CD4-positive, alpha-beta T cell (primary cell): ENCODE measurements at regions of chr13 and their contacts with region 1.

Region 1: DNA sequence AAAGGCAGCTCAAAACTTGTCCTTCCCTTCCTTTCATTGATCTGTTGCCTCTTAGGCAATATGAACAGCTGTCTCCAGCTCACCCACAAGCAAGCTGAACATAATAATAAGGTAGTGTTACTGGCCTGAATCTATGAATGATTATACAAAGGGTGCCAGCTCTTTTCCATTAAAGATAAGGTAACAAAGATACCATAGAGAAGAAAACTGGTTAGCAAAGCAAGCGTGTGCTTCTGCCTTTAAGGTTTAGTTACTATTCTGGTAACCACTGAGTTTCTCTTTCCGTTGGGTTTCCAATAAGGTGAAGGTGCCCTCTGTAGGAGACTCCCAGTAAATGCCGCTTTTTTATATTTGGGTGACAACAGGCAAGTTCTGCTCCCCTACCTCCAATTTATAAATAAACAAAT is 12.1 kb upstream of the DACH1 start:
- DNase-seq: peak in 3 of 14 experiments; percentile 13 to 44 (median 25)
- ATAC-seq: peak; percentile 60
- H3K4me3 ChIP-seq: no peak overlapping the region
- H3K4me3 Mint-ChIP-seq: no peak overlapping the region
- H3K27ac ChIP-seq: no peak overlapping the region
- H3K27ac Mint-ChIP-seq: no peak overlapping the region
- H3K4me1 ChIP-seq: no peaks in the 10 kb centered on the region
- H3K4me1 Mint-ChIP-seq: peaks cover 4% of the 10 kb centered on the region
- H3K27me3 ChIP-seq: no peaks in the 10 kb centered on the region
- H3K27me3 Mint-ChIP-seq: no peaks in the 10 kb centered on the region
- CTCF ChIP-seq: peak; percentile 46

Region 2: GRCh38 chr13:70960841-70961443 is 918.2 kb before region 1 on chr13:
- CTCF ChIA-PET with region 1: no interaction called
- POLR2A ChIA-PET with region 1: no interaction called
- intact Hi-C with region 1: loop called in 1 of 2 experiments (anchors 5 kb)
- DNase-seq: peak in 1 of 14 experiments; percentile 4
- ATAC-seq: no peak
- H3K4me3 ChIP-seq: no peak overlapping the region
- H3K4me3 Mint-ChIP-seq: no peak overlapping the region
- H3K27ac ChIP-seq: no peak overlapping the region
- H3K27ac Mint-ChIP-seq: no peak overlapping the region
- H3K4me1 ChIP-seq: no peaks in the 10 kb centered on the region
- H3K4me1 Mint-ChIP-seq: no peaks in the 10 kb centered on the region
- H3K27me3 ChIP-seq: no peaks in the 10 kb centered on the region
- H3K27me3 Mint-ChIP-seq: no peaks in the 10 kb centered on the region
- CTCF ChIP-seq: peak; percentile 31

Region 3: GRCh38 chr13:71240911-71241310 is 638.2 kb before region 1 on chr13:
- CTCF ChIA-PET with region 1: no interaction called
- POLR2A ChIA-PET with region 1: no interaction called
- intact Hi-C with region 1: loop called in 1 of 2 experiments (anchors 5 kb)
- DNase-seq: no peak
- ATAC-seq: no peak
- H3K4me3 ChIP-seq: no peak overlapping the region
- H3K4me3 Mint-ChIP-seq: no peak overlapping the region
- H3K27ac ChIP-seq: no peak overlapping the region
- H3K27ac Mint-ChIP-seq: no peak overlapping the region
- H3K4me1 ChIP-seq: no peaks in the 10 kb centered on the region
- H3K4me1 Mint-ChIP-seq: no peaks in the 10 kb centered on the region
- H3K27me3 ChIP-seq: no peaks in the 10 kb centered on the region
- H3K27me3 Mint-ChIP-seq: no peaks in the 10 kb centered on the region
- CTCF ChIP-seq: no peak

Region 4: DNA sequence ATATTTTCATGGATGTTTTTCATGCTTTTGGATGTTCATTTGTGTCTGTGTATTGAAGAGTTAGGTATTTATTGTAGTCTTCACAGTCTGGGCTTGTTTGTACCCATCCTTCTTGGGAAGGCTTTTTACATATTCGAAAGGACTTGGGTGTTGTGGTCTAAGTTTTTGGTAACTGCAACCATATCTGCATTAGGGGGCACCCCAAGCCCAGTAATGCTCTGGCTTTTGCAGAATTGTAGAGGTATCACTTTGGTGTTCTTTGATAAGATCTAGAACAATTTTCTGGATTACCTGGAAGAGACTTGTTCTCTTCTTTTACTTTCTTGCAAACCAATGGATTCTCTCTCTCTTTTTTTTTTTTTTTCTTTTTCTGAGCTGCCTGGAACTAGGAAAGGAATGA is 593.4 kb before region 1 on chr13:
- CTCF ChIA-PET with region 1: no interaction called
- POLR2A ChIA-PET with region 1: no interaction called
- intact Hi-C with region 1: loop called (anchors 5 kb)
- DNase-seq: peak in 3 of 14 experiments; percentile 16 to 40 (median 17)
- ATAC-seq: no peak
- H3K4me3 ChIP-seq: no peak overlapping the region
- H3K4me3 Mint-ChIP-seq: no peak overlapping the region
- H3K27ac ChIP-seq: no peak overlapping the region
- H3K27ac Mint-ChIP-seq: no peak overlapping the region
- H3K4me1 ChIP-seq: peaks cover 7% of the 10 kb centered on the region
- H3K4me1 Mint-ChIP-seq: peaks cover 2% of the 10 kb centered on the region
- H3K27me3 ChIP-seq: no peaks in the 10 kb centered on the region
- H3K27me3 Mint-ChIP-seq: peaks cover 7% of the 10 kb centered on the region
- CTCF ChIP-seq: no peak